Mammary epithelial cell (primary cell): ENCODE measurements at regions of chr10 and their contacts with region 1.

Region 1: DNA sequence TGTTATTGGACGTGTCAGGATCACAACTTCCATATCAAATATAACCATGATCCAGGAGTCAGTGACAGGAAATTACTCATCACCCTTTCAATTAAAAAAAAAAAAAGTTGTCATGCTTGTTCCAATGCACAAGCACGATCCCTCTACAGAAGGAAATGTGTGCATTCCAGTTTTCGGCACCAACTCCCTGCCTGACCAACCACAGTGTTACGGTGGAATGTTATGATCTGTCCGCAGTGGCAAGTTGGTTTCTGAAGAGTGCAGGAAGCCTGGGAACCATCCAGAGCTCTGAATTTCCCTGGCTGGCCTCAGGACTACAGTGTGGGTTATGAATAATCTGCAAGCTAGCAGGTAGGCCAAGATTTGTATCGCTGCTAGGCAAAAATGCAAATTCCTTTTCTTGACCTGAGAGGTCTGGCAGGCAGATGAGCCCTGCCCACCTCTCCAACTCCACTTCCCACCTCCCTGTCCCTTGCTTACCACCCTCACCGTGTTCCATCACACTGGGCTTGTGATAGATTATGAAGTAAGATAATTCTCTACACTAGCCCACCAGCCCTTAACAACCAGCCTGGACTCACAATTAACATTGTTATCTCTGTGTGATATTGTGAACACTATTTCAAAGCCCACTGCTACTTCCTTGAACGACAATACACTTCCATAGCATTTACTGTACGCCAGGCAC is 20.4 kb downstream of the FRMPD2 start:
- DNase-seq: peak; percentile 97
- H3K4me3 ChIP-seq: no peak overlapping the region
- H3K27ac ChIP-seq: peak overlapping the region; percentile 42
- H3K4me1 ChIP-seq: peaks cover 41% of the 10 kb centered on the region
- H3K27me3 ChIP-seq: no peaks in the 10 kb centered on the region
- CTCF ChIP-seq: no peak

Region 2: DNA sequence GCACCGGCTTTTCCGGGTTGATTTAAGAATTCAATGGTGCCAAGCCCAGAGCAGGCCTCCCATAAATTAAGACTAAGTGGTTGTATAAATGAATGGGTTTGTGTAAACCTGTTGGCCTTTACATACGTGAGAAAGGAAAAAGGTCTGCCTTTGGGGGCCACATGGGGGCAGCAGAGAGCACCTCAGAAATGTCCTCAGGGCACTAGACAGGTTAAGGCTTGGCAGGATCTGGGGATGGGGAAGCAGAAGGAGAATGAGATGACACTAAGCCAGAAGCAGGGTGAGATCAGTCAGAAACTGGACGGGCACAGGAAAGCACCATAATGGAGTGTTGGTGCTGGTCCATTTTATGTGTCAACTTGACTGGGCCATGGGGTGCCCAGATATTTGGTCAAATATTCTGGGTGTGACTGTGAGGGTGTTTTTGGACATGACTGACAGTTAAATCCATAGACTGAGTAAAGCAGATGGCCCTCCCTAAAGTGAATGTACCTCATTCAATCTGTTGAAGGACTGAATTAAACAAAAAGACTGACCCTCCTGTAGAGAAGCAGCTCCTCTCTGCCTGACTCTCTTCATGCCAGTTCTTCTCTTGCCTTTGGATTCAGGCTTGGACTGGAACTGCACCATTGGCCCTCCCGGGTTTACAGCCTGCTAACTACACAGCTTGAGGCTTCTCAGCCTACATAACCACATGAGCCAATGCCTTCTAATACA is 38.5 kb before region 1 on chr10:
- CTCF ChIA-PET with region 1: no interaction called
- dilution Hi-C with region 1: no loop called
- in situ Hi-C with region 1: no loop called
- intact Hi-C with region 1: loop called (anchors 5 kb)
- DNase-seq: peak; percentile 69
- H3K4me3 ChIP-seq: no peak overlapping the region
- H3K27ac ChIP-seq: no peak overlapping the region
- H3K4me1 ChIP-seq: peaks cover 5% of the 10 kb centered on the region
- H3K27me3 ChIP-seq: no peaks in the 10 kb centered on the region
- CTCF ChIP-seq: peak; percentile 77 to 79

Region 3: GRCh38 chr10:48289501-48290238 is 35.6 kb after region 1 on chr10:
- CTCF ChIA-PET with region 1: no interaction called
- dilution Hi-C with region 1: no loop called
- in situ Hi-C with region 1: no loop called
- intact Hi-C with region 1: loop called (anchors 2 kb)
- DNase-seq: peak; percentile 26
- H3K4me3 ChIP-seq: no peak overlapping the region
- H3K27ac ChIP-seq: no peak overlapping the region
- H3K4me1 ChIP-seq: peaks cover 3% of the 10 kb centered on the region
- H3K27me3 ChIP-seq: no peaks in the 10 kb centered on the region
- CTCF ChIP-seq: peak; percentile 69 to 87

Region 4: DNA sequence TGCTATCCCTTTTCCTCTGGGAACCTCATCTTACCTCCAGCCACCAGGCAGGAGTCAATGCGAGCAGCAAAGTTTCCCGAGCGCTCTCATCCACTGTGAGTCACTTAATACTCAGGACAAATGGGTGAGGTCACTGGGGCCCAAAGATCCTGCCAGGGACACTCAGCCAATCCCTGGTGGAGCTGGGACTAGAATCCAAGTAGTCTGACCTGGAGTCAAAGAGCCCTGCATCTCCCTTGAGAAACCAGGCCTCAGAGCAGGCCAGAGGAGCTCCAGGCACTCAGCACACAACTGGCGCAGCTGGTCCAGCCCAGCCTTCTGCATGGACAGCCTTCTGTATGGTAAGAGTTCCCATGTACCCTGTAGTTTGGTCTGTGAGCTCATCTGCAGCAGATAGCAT is 194.7 kb after region 1 on chr10:
- CTCF ChIA-PET with region 1: no interaction called
- dilution Hi-C with region 1: no loop called
- in situ Hi-C with region 1: no loop called
- intact Hi-C with region 1: no loop called
- DNase-seq: peak; percentile 47
- H3K4me3 ChIP-seq: no peak overlapping the region
- H3K27ac ChIP-seq: no peak overlapping the region
- H3K4me1 ChIP-seq: no peaks in the 10 kb centered on the region
- H3K27me3 ChIP-seq: no peaks in the 10 kb centered on the region
- CTCF ChIP-seq: no peak